T-cell (primary cell): ENCODE measurements at regions of chr6 and their contacts with region 1.

Region 1: DNA sequence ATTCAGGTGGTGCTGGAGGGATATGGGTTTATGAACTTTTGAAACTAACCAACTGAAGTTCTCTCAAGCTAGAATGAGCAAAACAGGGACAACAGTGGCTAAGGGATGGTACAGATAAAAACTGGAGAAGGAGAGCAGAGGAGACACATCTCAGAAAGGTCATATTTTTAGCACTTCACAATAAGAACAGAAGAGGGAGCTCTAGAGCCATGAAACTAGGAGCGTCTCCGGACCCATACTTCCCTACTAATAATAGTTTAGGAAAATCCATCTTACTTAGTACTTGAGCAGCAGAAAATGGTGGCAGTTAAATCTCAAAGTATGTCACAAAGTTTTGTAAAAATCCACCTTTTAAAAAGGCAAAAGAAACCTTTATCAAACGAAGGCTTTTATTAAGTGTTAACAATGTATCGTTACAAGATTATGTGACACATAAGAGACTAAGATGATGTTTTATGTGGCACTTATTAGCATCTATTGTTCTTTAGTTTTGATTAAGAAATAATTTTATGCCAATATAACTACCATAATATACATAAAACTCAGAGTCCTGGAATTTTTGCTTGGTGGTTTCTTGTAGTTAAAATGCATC is 278.6 kb downstream of the TBC1D32 start:
- DNase-seq: peak in 2 of 35 experiments; percentile 12 to 48
- ATAC-seq: peak in 1 of 4 experiments; percentile 34
- H3K4me3 ChIP-seq: no peak overlapping the region
- H3K4me3 Mint-ChIP-seq: no peak overlapping the region
- H3K27ac ChIP-seq: no peak overlapping the region
- H3K27ac Mint-ChIP-seq: no peak overlapping the region
- H3K4me1 ChIP-seq: no peaks in the 10 kb centered on the region
- H3K4me1 Mint-ChIP-seq: no peaks in the 10 kb centered on the region
- H3K27me3 ChIP-seq: no peaks in the 10 kb centered on the region
- H3K27me3 Mint-ChIP-seq: no peaks in the 10 kb centered on the region

Region 2: GRCh38 chr6:120700001-120700400 is 355.7 kb before region 1 on chr6:
- CTCF ChIA-PET with region 1: no interaction called
- POLR2A ChIA-PET with region 1: no interaction called
- DNase-seq: no peak
- ATAC-seq: no peak
- H3K4me3 ChIP-seq: no peak overlapping the region
- H3K4me3 Mint-ChIP-seq: no peak overlapping the region
- H3K27ac ChIP-seq: no peak overlapping the region
- H3K27ac Mint-ChIP-seq: no peak overlapping the region
- H3K4me1 ChIP-seq: no peaks in the 10 kb centered on the region
- H3K4me1 Mint-ChIP-seq: no peaks in the 10 kb centered on the region
- H3K27me3 ChIP-seq: no peaks in the 10 kb centered on the region
- H3K27me3 Mint-ChIP-seq: no peaks in the 10 kb centered on the region

Region 3: DNA sequence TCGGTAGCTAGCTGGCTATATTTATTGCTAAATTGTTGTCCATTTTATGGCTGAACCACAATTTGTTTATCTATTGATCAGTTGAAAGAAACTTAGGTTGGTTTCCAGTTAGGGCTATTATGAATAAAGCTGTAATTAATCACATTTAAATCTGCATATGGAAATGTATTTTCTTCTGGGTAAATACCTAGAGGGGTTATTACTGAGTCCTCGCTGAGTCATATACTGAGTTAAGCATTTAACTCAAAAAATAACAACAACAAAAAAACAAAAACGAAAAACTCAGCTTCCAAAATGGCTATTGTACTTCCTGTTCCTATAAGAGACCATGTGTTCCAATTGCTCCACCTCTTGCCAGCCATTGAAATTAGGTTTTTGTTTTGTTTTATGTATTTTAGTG is 20.5 kb after region 1 on chr6:
- CTCF ChIA-PET with region 1: interaction called, 3 to 4 read pairs
- POLR2A ChIA-PET with region 1: interaction called in 1 of 2 experiments, 10 read pairs
- DNase-seq: no peak
- ATAC-seq: no peak
- H3K4me3 ChIP-seq: no peak overlapping the region
- H3K4me3 Mint-ChIP-seq: no peak overlapping the region
- H3K27ac ChIP-seq: no peak overlapping the region
- H3K27ac Mint-ChIP-seq: no peak overlapping the region
- H3K4me1 ChIP-seq: no peaks in the 10 kb centered on the region
- H3K4me1 Mint-ChIP-seq: peaks cover 0 to 2% (median 0%) of the 10 kb centered on the region in 3 donors
- H3K27me3 ChIP-seq: no peaks in the 10 kb centered on the region
- H3K27me3 Mint-ChIP-seq: no peaks in the 10 kb centered on the region